Activated T-helper 1 cell treated with anti-CD3 and anti-CD28 coated beads, Interleukin-12 subunit alpha, Interleukin-12 subunit beta, Interleukin-2, Interleukin-4 antibody, amounts not matched to agents 30 ng/mL and 10 ng/mL and 1 ng/mL, durations not matched to agents 14 hours and 24 hours and 36 hours (primary cell): ENCODE measurements at regions of chr1 and their contacts with region 1.

Region 1: DNA sequence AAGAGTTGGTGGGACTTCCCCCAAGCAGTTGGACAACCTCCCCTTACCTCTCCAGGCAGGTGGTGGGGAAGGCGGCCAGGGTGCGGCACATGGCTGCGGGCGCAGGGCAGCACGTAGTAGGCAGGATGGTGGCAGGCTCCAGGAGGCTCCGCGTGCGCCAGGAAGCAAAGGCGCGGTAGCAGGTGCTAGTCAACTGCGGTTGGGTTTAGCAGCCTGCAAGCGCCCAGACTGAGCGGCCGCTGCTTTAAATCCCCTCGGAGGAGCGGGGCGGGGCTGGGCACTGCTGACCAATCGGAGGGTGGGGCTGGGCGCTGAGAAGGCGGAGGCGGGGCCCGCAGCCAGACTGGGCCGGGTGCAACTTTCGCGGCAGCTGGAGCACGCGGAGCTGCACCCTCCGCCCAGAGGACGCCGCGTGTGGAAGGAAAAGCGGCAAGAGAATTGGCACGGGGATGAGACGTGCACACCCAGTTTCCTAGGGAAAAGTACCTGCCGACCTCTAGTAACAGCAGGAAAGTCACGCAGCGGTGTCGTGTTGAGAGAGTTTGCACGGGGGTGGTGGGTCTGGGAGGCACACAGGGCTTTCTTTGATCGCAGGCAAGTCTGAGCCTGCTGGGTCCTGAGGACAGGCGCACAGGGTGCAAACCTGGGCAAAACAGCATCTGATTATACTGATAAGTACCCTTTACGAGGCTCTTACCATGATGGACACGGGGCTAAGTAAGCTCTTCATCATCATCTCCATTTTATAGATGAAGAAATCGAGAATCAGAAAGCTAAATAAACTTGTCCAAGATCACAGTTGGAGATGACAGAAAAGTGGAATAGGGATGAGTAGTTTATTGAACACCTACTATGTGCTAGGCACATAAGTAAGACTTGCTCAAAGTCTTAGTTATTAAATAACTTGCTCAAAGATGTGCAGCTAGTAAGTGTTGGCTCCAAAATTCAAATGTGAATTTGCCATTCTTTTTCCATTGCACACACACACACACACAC is at the start of gene RGS16:
- DNase-seq: peak; percentile 91
- H3K4me3 Mint-ChIP-seq: peak within 1 kb of the TSS; percentile 25
- H3K27ac Mint-ChIP-seq: no peak within 1 kb of the TSS
- H3K4me1 Mint-ChIP-seq: peaks cover 50% of the 10 kb centered on the region
- H3K27me3 Mint-ChIP-seq: peaks cover 2% of the 10 kb centered on the region
- total RNA-seq, gene RGS16: 138 and 143 TPM in 2 replicates

Region 2: GRCh38 chr1:182143154-182143657 is 461.3 kb before region 1 on chr1:
- intact Hi-C with region 1: loop called (anchors 10 kb)
- DNase-seq: peak; percentile 74
- H3K4me3 Mint-ChIP-seq: no peak overlapping the region
- H3K27ac Mint-ChIP-seq: no peak overlapping the region
- H3K4me1 Mint-ChIP-seq: peaks cover 38% of the 10 kb centered on the region
- H3K27me3 Mint-ChIP-seq: peaks cover 2% of the 10 kb centered on the region

Region 3: GRCh38 chr1:182614796-182615454 is 10.5 kb after region 1 on chr1:
- intact Hi-C with region 1: loop called (anchors 1 kb)
- DNase-seq: peak; percentile 34
- H3K4me3 Mint-ChIP-seq: peak overlapping the region; percentile 81
- H3K27ac Mint-ChIP-seq: peak overlapping the region; percentile 88
- H3K4me1 Mint-ChIP-seq: peaks cover 89% of the 10 kb centered on the region
- H3K27me3 Mint-ChIP-seq: peaks cover 16% of the 10 kb centered on the region

Region 4: GRCh38 chr1:182662121-182662890 is 57.8 kb after region 1 on chr1:
- intact Hi-C with region 1: loop called (anchors 5 kb)
- DNase-seq: no peak
- H3K4me3 Mint-ChIP-seq: no peak overlapping the region
- H3K27ac Mint-ChIP-seq: no peak overlapping the region
- H3K4me1 Mint-ChIP-seq: no peaks in the 10 kb centered on the region
- H3K27me3 Mint-ChIP-seq: peaks cover 26% of the 10 kb centered on the region

Region 5: GRCh38 chr1:182716740-182717720 is 112.6 kb after region 1 on chr1:
- intact Hi-C with region 1: loop called (anchors 1 kb)
- DNase-seq: no peak
- H3K4me3 Mint-ChIP-seq: no peak overlapping the region
- H3K27ac Mint-ChIP-seq: peak overlapping the region; percentile 3
- H3K4me1 Mint-ChIP-seq: peaks cover 63% of the 10 kb centered on the region
- H3K27me3 Mint-ChIP-seq: no peaks in the 10 kb centered on the region

Region 6: GRCh38 chr1:182839209-182840065 is 235.0 kb after region 1 on chr1 and contains the start of gene DHX9:
- intact Hi-C with region 1: loop called (anchors 1 kb)
- DNase-seq: peak; percentile 94
- H3K4me3 Mint-ChIP-seq: peak within 1 kb of the TSS; percentile 94
- H3K27ac Mint-ChIP-seq: peak within 1 kb of the TSS; percentile 98
- H3K4me1 Mint-ChIP-seq: peaks cover 47% of the 10 kb centered on the region
- H3K27me3 Mint-ChIP-seq: peaks cover 3% of the 10 kb centered on the region
- total RNA-seq, gene DHX9: 346 and 355 TPM in 2 replicates